ENCODE measurements at regions of chr3 and their contacts with region 1.

Region 1: DNA sequence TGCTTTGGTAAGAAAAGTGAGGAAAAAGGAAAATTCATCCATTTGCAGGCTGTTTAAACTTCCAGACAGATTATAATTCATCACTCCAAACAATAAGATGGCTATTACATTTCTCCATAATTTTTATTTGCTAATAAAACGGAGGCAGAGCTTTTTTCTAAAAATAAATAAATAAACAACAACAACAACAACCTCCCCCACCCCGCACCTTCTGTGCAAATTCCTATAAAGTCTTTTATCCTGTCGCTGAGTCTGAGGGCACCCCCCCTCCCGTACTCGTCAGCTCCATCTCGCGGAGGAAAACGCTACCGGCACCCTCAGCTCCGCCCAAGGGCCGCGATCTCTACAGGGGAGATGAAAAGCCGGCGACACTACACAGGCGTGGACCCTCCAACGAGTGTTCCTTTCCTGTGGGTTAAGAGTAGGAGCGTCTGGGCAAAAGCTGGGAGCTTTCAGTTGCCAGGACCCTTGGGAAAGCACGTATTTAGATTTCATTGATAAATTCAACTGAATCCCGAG is 1.0 kb upstream of the ATP1B3 start:
- DNase-seq: peak; percentile 78 to 94 (median 88)
- H3K4me3 ChIP-seq: peak overlapping the region; percentile 5 to 89 (median 45)
- H3K27ac ChIP-seq: peak overlapping the region; percentile 92 to 99 (median 97)
- H3K4me1 ChIP-seq: peaks cover 17 to 30% of the 10 kb centered on the region in 2 donors
- H3K27me3 ChIP-seq: no peaks in the 10 kb centered on the region
- CTCF ChIP-seq: peak; percentile 75 to 90 (median 79)
- POLR2A ChIP-seq: peak in 1 of 2 donors; percentile 8

Region 2: GRCh38 chr3:141738022-141738890 is 137.2 kb before region 1 on chr3 and contains the start of gene RNF7:
- intact Hi-C with region 1: loop called in 1 of 2 experiments (anchors 10 kb)
- DNase-seq: peak; percentile 94 to 98 (median 96)
- H3K4me3 ChIP-seq: peak within 1 kb of the TSS; percentile 52 to 100 (median 74)
- H3K27ac ChIP-seq: peak within 1 kb of the TSS; percentile 86 to 95 (median 92)
- H3K4me1 ChIP-seq: peaks cover 14 to 33% of the 10 kb centered on the region in 2 donors
- H3K27me3 ChIP-seq: no peaks in the 10 kb centered on the region
- CTCF ChIP-seq: peak; percentile 67 to 98 (median 86)
- POLR2A ChIP-seq: peak; percentile 74 to 78
- total RNA-seq, gene RNF7: 87.4 to 200 (median 127) TPM

Region 3: GRCh38 chr3:141796081-141796888 is 79.1 kb before region 1 on chr3:
- intact Hi-C with region 1: loop called in 1 of 2 experiments (anchors 10 kb)
- DNase-seq: peak in 6 of 7 donors; percentile 13 to 79 (median 47)
- H3K4me3 ChIP-seq: no peak overlapping the region
- H3K27ac ChIP-seq: peak overlapping the region in 4 of 5 donors; percentile 67 to 88 (median 84)
- H3K4me1 ChIP-seq: peaks cover 12 to 25% of the 10 kb centered on the region in 2 donors
- H3K27me3 ChIP-seq: no peaks in the 10 kb centered on the region
- CTCF ChIP-seq: no peak
- POLR2A ChIP-seq: no peak

Region 4: DNA sequence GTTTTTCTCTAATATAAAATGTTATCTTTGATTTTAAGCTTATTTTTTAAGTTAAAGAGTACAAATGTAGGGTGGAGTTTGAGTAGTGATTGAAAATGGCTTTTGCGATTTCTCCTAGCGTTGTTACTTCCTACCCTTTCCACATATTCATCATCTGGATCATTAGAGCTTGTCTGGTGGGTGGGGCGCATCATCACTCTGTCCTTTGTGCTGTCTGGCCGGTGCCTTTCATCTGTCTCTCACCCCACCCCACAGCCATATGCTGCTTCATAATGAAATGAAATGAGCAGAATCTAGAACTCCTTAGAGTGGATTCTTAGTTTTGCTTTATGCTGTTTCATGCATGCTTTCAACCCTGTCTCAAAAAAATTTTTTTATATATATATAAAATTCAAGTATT is 45.3 kb after region 1 on chr3:
- intact Hi-C with region 1: no loop called
- DNase-seq: peak in 2 of 7 donors; percentile 2 to 40
- H3K4me3 ChIP-seq: no peak overlapping the region
- H3K27ac ChIP-seq: no peak overlapping the region
- H3K4me1 ChIP-seq: no peaks in the 10 kb centered on the region
- H3K27me3 ChIP-seq: no peaks in the 10 kb centered on the region
- CTCF ChIP-seq: no peak
- POLR2A ChIP-seq: no peak